Activated T-helper 1 cell treated with anti-CD3 and anti-CD28 coated beads, Interleukin-12 subunit alpha, Interleukin-12 subunit beta, Interleukin-2, Interleukin-4 antibody, amounts not matched to agents 30 ng/mL and 10 ng/mL and 1 ng/mL, durations not matched to agents 14 hours and 24 hours and 36 hours (primary cell): ENCODE measurements at regions of chr5 and their contacts with region 1.

Region 1: DNA sequence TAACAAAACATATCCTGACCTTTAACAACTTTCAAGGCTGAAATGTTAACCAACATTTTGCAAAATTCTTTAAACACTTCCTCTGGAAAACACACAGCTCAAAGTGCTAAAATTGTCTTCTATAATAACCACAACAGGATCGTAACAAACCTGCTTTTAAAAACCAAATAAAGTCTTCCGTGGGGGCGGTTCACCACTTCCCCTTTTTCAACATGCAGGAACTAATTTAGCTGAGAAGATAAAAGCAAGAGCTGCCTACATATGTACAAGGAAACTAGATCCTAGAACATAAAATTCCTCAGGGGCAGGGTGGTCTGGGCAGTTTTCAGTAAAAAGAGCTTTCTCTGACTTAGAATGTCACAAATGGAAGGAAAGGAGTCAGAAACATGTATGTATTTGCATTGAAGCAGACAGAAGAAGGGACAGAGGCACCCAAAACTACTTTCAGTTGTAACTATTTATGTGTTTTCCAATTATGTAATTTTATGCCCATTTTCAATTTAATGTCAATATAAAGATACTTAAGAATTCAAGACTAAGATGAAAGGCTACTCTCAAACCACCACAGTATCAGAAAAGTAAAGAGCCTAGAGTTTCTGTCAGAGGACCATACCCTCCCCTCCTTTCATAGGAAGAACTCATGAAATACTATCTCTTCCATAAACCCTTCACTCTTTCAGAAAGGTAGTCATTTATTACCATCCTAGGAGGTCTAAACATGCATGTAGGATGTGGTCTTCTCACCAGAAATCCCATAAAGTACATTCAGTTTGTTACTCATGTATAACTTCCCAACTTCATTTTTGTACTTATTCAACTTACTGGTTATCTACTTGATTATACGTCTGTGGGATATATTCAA is 185.9 kb upstream of the RASA1 start:
- DNase-seq: peak; percentile 41
- H3K4me3 Mint-ChIP-seq: peak overlapping the region; percentile 65
- H3K27ac Mint-ChIP-seq: peak overlapping the region; percentile 73
- H3K4me1 Mint-ChIP-seq: peaks cover 55% of the 10 kb centered on the region
- H3K27me3 Mint-ChIP-seq: no peaks in the 10 kb centered on the region

Region 2: GRCh38 chr5:87231037-87231819 is 149.5 kb after region 1 on chr5:
- intact Hi-C with region 1: loop called (anchors 1 kb)
- DNase-seq: no peak
- H3K4me3 Mint-ChIP-seq: no peak overlapping the region
- H3K27ac Mint-ChIP-seq: no peak overlapping the region
- H3K4me1 Mint-ChIP-seq: peaks cover 5% of the 10 kb centered on the region
- H3K27me3 Mint-ChIP-seq: peaks cover 3% of the 10 kb centered on the region

Region 3: GRCh38 chr5:87313216-87313615 is 231.5 kb after region 1 on chr5:
- intact Hi-C with region 1: no loop called
- DNase-seq: no peak
- H3K4me3 Mint-ChIP-seq: no peak overlapping the region
- H3K27ac Mint-ChIP-seq: no peak overlapping the region
- H3K4me1 Mint-ChIP-seq: peaks cover 22% of the 10 kb centered on the region
- H3K27me3 Mint-ChIP-seq: no peaks in the 10 kb centered on the region

Region 4: GRCh38 chr5:87340716-87341115 is 259.0 kb after region 1 on chr5:
- intact Hi-C with region 1: loop called (anchors 2 kb)
- DNase-seq: no peak
- H3K4me3 Mint-ChIP-seq: peak overlapping the region; percentile 70
- H3K27ac Mint-ChIP-seq: peak overlapping the region; percentile 86
- H3K4me1 Mint-ChIP-seq: peaks cover 32% of the 10 kb centered on the region
- H3K27me3 Mint-ChIP-seq: no peaks in the 10 kb centered on the region